MCF 10A (cell line): ENCODE measurements at regions of chr7 and their contacts with region 1.

Region 1: DNA sequence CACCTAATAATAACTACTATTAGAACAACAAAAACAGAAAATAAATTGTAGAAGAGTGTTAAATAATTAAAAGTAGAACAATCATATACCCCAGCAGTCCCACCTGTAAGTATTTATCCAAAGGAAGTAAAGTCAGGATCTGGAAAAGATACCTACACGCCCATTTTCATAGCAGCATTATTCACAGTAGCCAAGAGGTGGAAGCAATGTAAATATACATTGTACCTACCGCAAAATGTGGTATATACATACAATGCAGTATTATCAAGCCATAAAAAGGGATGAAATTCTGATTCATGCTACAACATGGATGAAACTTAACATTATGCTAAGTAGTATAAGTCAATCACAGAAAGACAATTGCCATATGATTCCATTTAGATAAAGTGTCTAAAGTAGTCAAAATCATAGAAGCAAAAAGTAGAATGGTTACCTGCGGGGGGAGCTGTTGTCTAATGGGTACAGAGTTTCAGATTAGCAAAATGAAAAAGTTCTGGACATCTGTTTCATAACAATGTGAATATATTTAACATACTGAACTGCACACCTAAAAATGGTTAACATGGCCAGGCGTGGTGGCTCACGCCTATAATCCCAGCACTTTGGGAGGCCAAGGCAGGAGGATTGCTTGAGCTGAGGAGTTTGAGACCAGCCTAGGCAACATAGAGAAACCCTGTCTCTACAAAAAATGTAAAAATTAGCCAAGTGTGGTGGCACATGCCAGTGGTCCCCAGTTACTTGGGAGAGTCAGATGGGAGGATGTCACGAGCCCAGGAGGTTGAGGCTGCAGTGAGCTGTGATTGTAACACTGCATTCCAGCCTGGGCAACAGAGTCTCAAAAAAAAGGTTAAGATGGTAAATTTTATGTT is 6.0 kb upstream of the TMED4 start:
- DNase-seq: peak; percentile 76
- H3K4me3 Mint-ChIP-seq: no peak overlapping the region
- H3K27ac Mint-ChIP-seq: no peak overlapping the region
- H3K4me1 Mint-ChIP-seq: peaks cover 7% of the 10 kb centered on the region
- H3K27me3 Mint-ChIP-seq: peaks cover 6% of the 10 kb centered on the region
- CTCF ChIP-seq: peak; percentile 72

Region 2: GRCh38 chr7:44921607-44922359 is 333.7 kb after region 1 on chr7:
- CTCF ChIA-PET with region 1: no interaction called
- POLR2A ChIA-PET with region 1: no interaction called
- intact Hi-C with region 1: loop called (anchors 1 kb)
- DNase-seq: peak; percentile 81
- H3K4me3 Mint-ChIP-seq: no peak overlapping the region
- H3K27ac Mint-ChIP-seq: no peak overlapping the region
- H3K4me1 Mint-ChIP-seq: no peaks in the 10 kb centered on the region
- H3K27me3 Mint-ChIP-seq: no peaks in the 10 kb centered on the region
- CTCF ChIP-seq: peak; percentile 82